ENCODE measurements at regions of chr4 and their contacts with region 1.

Region 1: GRCh38 chr4:39697740-39698423 is at the start of gene UBE2K:
- DNase-seq: peak; percentile 93
- ATAC-seq: peak; percentile 89
- H3K4me3 Mint-ChIP-seq: peak within 1 kb of the TSS; percentile 99
- H3K27ac Mint-ChIP-seq: peak within 1 kb of the TSS; percentile 96
- H3K4me1 Mint-ChIP-seq: peaks cover 48% of the 10 kb centered on the region
- H3K27me3 Mint-ChIP-seq: no peaks in the 10 kb centered on the region
- CTCF ChIP-seq: no peak
- total RNA-seq, gene UBE2K: 54.4 and 64.0 TPM in 2 replicates

Region 2: DNA sequence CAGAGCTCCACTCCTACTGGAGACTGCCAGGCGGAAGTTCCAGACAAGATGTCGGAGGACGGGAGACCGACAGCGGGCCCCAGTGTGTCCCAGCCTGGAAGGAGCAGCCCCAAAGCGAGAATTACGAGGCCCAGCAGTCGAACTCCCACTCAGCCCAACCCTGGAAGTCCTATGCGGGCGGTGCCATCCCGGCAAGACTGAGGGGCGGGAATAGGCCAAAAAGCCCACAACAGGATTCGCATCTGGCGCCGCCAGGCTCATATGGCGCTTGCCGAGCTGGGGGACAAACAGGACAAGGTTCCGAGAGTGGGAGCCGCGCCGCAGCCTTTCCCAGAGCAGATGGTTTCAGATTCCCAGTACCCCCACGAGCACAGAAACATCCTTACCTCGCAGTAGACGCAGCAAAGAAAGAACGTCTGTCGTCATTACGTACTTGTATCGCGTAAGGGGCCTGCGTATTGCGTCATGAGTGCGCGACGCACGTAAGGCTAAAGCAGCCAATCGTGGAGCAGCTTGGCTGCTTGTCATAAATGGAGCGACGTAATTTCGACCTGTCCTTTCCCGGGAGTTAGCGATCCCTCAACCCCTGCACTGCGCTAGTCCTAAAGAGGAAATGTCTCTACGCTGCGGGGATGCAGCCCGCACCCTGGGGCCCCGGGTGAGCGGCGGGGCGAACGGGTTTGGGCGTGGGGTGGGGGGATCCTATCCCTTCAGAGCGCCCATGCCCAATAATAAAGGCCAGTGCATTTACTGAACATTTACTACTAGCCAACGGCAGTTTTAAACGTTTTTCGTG is 239.2 kb before region 1 on chr4 and contains the starts of genes LIAS and RPL9:
- CTCF ChIA-PET with region 1: no interaction called
- POLR2A ChIA-PET with region 1: interaction called, 8 read pairs
- intact Hi-C with region 1: loop called (anchors 2 kb)
- DNase-seq: peak; percentile 90
- ATAC-seq: peak; percentile 81
- H3K4me3 Mint-ChIP-seq: peak within 1 kb of the TSS; percentile 97
- H3K27ac Mint-ChIP-seq: peak within 1 kb of the TSS; percentile 98
- H3K4me1 Mint-ChIP-seq: peaks cover 36% of the 10 kb centered on the region
- H3K27me3 Mint-ChIP-seq: no peaks in the 10 kb centered on the region
- CTCF ChIP-seq: no peak
- total RNA-seq, gene LIAS: 19.5 and 20.5 TPM in 2 replicates
- total RNA-seq, gene RPL9: 2,632 and 2,865 TPM in 2 replicates

Region 3: DNA sequence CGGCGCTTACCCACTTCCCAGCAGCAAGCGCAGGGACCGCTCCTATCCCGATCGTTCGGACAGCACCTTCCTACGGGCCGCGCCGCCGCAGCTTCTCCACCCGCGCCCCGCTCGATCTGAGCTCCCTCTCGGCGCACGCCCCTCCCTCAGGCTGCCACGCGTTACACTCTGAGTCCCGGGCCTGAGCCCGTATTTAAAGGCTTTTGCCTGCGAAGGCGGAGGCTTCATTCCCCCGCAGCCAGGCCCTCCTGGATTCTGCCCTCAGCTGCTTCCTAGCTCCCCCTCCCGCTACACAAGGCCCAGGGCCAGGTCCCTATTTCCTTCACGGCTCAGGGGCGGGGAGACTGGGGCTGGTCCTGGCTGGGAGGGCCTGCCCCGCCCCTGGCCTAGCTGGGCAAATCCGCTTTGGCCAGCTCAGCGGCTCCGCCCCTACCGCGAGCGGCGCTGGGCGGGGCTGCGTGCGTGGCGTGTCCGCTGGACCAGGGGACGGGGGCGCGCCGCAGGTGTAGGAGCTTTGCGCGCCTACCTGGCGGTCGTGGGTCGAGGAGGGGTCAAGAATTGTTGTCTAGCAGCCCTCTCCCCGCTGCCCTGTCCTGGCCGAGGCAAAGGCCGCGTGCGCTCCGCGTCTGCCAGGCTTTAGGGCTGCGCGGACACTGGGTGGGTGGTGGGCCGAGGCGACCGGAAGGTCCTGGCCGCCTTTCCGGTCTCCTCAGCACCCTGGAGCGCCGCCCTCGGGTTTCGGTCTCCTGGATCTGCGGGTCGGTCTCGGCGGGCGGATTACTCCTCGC is 170.4 kb before region 1 on chr4 and contains the start of gene UGDH:
- CTCF ChIA-PET with region 1: no interaction called
- POLR2A ChIA-PET with region 1: interaction called, 20 read pairs
- intact Hi-C with region 1: loop called (anchors 1 kb)
- DNase-seq: peak; percentile 94
- ATAC-seq: peak; percentile 99
- H3K4me3 Mint-ChIP-seq: peak within 1 kb of the TSS; percentile 98
- H3K27ac Mint-ChIP-seq: peak within 1 kb of the TSS; percentile 93
- H3K4me1 Mint-ChIP-seq: peaks cover 20% of the 10 kb centered on the region
- H3K27me3 Mint-ChIP-seq: no peaks in the 10 kb centered on the region
- CTCF ChIP-seq: no peak
- total RNA-seq, gene UGDH: 40.6 and 43.3 TPM in 2 replicates

Region 4: GRCh38 chr4:39631700-39632079 is 66.2 kb before region 1 on chr4:
- CTCF ChIA-PET with region 1: no interaction called
- POLR2A ChIA-PET with region 1: interaction called, 22 read pairs
- intact Hi-C with region 1: no loop called
- DNase-seq: no peak
- ATAC-seq: peak; percentile 70
- H3K4me3 Mint-ChIP-seq: peak overlapping the region; percentile 44
- H3K27ac Mint-ChIP-seq: peak overlapping the region; percentile 96
- H3K4me1 Mint-ChIP-seq: peaks cover 86% of the 10 kb centered on the region
- H3K27me3 Mint-ChIP-seq: no peaks in the 10 kb centered on the region
- CTCF ChIP-seq: no peak

Region 5: DNA sequence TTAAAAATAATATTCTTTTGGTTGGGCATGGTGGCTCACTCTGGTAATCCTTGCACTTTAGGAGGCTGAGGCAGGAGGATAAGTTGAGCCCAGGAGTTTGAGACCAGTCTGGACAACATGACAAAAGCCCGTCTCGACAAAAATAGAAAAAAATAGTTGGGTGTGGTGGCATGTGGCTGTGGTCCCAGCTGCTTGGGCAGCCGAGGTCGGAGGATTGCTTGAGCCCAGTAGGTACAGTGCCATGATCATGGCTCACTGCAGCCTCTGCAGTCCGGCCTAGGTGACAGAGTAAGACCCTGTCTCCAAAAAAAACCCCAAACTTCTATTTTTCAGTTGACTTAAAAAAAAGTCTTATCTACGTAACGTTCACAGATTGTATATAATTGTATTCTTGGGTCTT is 23.9 kb after region 1 on chr4:
- CTCF ChIA-PET with region 1: no interaction called
- POLR2A ChIA-PET with region 1: no interaction called
- intact Hi-C with region 1: no loop called
- DNase-seq: no peak
- ATAC-seq: no peak
- H3K4me3 Mint-ChIP-seq: no peak overlapping the region
- H3K27ac Mint-ChIP-seq: no peak overlapping the region
- H3K4me1 Mint-ChIP-seq: peaks cover 65% of the 10 kb centered on the region
- H3K27me3 Mint-ChIP-seq: no peaks in the 10 kb centered on the region
- CTCF ChIP-seq: no peak

Region 6: DNA sequence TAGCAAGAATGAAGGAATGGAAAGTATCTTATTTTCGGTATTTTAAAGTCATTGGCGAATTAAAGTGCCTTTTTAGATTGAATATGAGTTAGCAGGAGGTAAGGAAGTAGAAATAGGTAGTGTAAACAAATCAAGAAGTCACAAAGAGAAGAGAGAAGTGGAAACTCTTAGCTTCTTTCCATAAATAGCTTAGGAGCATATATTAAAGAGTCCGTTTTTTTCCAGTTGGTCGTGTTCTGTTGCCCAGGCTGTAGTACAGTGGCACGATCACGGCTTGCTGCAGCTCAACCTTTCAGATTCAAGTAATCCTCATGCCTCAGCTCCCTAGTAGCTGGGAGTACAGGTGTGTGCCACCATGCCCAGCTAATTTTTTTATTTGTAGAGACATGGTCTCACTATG is 56.4 kb after region 1 on chr4:
- CTCF ChIA-PET with region 1: no interaction called
- POLR2A ChIA-PET with region 1: no interaction called
- intact Hi-C with region 1: loop called (anchors 5 kb)
- DNase-seq: no peak
- ATAC-seq: peak; percentile 60
- H3K4me3 Mint-ChIP-seq: peak overlapping the region; percentile 33
- H3K27ac Mint-ChIP-seq: peak overlapping the region; percentile 69
- H3K4me1 Mint-ChIP-seq: peaks cover 24% of the 10 kb centered on the region
- H3K27me3 Mint-ChIP-seq: no peaks in the 10 kb centered on the region
- CTCF ChIP-seq: no peak

Measured in activated B cell treated with CpG ODN at 0.5 μM for 24 hours (primary cell).